ENCODE measurements at regions of chr19 and their contacts with region 1.

Region 1: GRCh38 chr19:37906869-37907734 is at the start of gene SIPA1L3:
- DNase-seq: peak; percentile 96
- H3K4me3 Mint-ChIP-seq: peak within 1 kb of the TSS; percentile 73
- H3K27ac Mint-ChIP-seq: peak within 1 kb of the TSS; percentile 74
- H3K4me1 Mint-ChIP-seq: peaks cover 19% of the 10 kb centered on the region
- H3K27me3 Mint-ChIP-seq: no peaks in the 10 kb centered on the region
- total RNA-seq, gene SIPA1L3: 10.3 to 12.1 TPM

Region 2: DNA sequence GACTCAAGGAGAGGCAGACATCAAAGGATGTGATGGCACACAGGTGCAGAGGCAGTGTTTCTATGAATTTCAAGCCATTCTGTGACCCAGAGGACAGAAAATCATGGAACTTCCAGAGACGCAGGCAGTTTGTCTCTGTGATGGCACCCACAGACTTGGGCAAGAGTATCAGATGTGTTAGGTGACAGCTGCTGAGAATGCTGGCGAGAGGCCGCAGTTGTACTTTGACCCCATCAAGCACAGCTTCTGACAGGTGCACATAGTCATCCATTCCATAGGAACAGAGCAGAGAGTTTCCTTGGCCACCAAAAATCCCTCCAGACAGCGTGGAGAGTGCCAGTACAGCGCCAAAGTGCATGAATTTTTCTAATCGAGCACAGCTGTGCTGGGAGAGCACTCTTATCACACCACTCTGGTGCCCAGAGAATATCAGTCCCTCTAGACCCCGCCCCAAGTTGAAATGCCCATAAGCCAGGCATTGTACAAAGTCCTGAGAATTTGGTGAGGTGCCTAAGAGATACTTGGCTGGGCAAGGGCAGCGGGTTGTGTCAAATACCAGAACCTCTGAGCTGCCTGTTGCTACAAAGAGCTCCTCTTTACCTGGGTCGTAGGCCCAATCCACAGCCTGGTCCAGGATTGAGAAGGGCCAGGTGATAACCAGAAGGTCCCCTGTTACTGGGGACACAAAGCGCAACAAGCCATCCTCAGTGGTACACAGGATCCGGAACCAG is 13.1 kb before region 1 on chr19:
- CTCF ChIA-PET with region 1: interaction called, 10 read pairs
- POLR2A ChIA-PET with region 1: no interaction called
- intact Hi-C with region 1: no loop called
- DNase-seq: no peak
- H3K4me3 Mint-ChIP-seq: no peak overlapping the region
- H3K27ac Mint-ChIP-seq: no peak overlapping the region
- H3K4me1 Mint-ChIP-seq: no peaks in the 10 kb centered on the region
- H3K27me3 Mint-ChIP-seq: peaks cover 15% of the 10 kb centered on the region

Region 3: GRCh38 chr19:38079926-38080380 is 172.9 kb after region 1 on chr19:
- CTCF ChIA-PET with region 1: interaction called, 11 read pairs
- POLR2A ChIA-PET with region 1: interaction called, 3 read pairs
- intact Hi-C with region 1: loop called (anchors 1 kb)
- DNase-seq: peak; percentile 19
- H3K4me3 Mint-ChIP-seq: no peak overlapping the region
- H3K27ac Mint-ChIP-seq: peak overlapping the region; percentile 54
- H3K4me1 Mint-ChIP-seq: peaks cover 16% of the 10 kb centered on the region
- H3K27me3 Mint-ChIP-seq: no peaks in the 10 kb centered on the region

Region 4: DNA sequence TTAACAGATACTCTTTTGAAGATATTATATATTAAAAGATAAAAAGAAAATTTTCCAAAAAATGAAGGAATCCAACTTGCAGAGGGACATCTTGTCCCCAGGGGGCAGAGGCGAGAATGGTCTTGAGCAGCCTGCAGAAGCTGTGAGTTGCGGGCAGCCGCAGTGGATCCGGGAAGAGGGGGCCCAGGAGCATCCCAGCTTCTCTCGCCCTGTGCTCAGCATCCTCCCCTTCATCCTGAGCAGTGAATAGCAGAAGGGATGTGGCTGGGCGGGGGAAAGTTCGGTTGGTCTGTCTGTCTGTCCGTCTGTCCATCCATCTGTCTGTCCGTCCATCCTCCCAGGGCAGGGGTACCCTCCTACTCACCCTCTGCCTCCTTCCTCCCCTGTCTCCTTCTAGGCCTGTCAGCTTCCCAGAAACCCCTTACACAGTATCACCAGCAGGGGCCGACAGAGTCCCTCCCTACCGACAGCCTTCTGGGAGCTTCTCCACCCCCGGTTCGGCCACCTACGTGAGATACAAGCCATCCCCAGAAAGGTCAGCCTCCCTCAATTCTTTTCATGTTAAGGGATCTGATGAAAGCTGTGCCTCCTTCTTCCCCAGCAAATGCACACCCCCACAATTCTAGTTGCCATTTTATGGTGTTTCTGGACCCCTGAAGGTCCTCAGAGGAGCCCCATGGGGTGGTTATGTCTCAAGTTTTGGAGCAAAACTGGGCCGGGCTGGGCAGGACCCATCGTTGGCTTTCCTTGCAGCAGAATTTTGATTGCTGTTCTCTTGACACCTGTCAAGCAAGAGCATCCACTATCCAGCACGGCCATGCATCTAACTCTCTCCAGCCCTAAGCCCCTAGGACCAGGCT is 235.3 kb after region 1 on chr19:
- CTCF ChIA-PET with region 1: interaction called, 23 read pairs
- POLR2A ChIA-PET with region 1: interaction called, 3 read pairs
- intact Hi-C with region 1: no loop called
- DNase-seq: peak; percentile 67
- H3K4me3 Mint-ChIP-seq: no peak overlapping the region
- H3K27ac Mint-ChIP-seq: no peak overlapping the region
- H3K4me1 Mint-ChIP-seq: no peaks in the 10 kb centered on the region
- H3K27me3 Mint-ChIP-seq: no peaks in the 10 kb centered on the region

Region 5: GRCh38 chr19:38245826-38246498 is 338.9 kb after region 1 on chr19:
- CTCF ChIA-PET with region 1: interaction called, 10 read pairs
- POLR2A ChIA-PET with region 1: no interaction called
- intact Hi-C with region 1: no loop called
- DNase-seq: no peak
- H3K4me3 Mint-ChIP-seq: no peak overlapping the region
- H3K27ac Mint-ChIP-seq: no peak overlapping the region
- H3K4me1 Mint-ChIP-seq: peaks cover 2% of the 10 kb centered on the region
- H3K27me3 Mint-ChIP-seq: no peaks in the 10 kb centered on the region

Region 6: GRCh38 chr19:38335949-38336637 is 429.0 kb after region 1 on chr19:
- CTCF ChIA-PET with region 1: interaction called, 12 read pairs
- POLR2A ChIA-PET with region 1: no interaction called
- intact Hi-C with region 1: loop called (anchors 1 kb)
- DNase-seq: peak; percentile 98
- H3K4me3 Mint-ChIP-seq: peak overlapping the region; percentile 91
- H3K27ac Mint-ChIP-seq: peak overlapping the region; percentile 96
- H3K4me1 Mint-ChIP-seq: peaks cover 6% of the 10 kb centered on the region
- H3K27me3 Mint-ChIP-seq: no peaks in the 10 kb centered on the region